B cell (primary cell): ENCODE measurements at regions of chr4 and their contacts with region 1.

Region 1: DNA sequence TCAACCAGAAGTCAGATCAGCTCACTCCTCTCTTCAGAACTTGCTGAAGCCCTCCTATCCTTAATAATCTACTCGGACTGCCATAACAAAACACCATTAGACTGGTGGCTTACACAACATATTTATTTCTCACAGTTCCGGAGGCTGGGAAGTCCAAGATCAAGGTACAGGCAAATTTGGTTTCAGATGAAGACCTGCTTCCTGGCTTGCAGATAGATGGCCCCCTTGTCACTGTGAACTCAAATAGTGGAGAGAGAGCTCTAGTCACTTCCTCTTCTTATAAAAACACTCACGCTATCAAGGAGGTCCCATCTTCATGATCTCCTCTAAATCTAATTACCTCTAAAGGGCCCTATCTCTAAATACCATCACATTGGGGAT is 125.1 kb downstream of the CAMK2D start:
- DNase-seq: peak; percentile 75
- ATAC-seq: peak; percentile 66
- H3K4me3 ChIP-seq: peak overlapping the region in 3 of 5 experiments; percentile 10 to 18 (median 12)
- H3K4me3 Mint-ChIP-seq: peak overlapping the region; percentile 64
- H3K27ac ChIP-seq: peak overlapping the region; percentile 71 to 76
- H3K27ac Mint-ChIP-seq: peak overlapping the region; percentile 86
- H3K4me1 ChIP-seq: peaks cover 56 to 71% of the 10 kb centered on the region in 2 donors
- H3K4me1 Mint-ChIP-seq: peaks cover 70% of the 10 kb centered on the region
- H3K27me3 ChIP-seq: no peaks in the 10 kb centered on the region
- H3K27me3 Mint-ChIP-seq: no peaks in the 10 kb centered on the region
- CTCF ChIP-seq: peak; percentile 52

Region 2: DNA sequence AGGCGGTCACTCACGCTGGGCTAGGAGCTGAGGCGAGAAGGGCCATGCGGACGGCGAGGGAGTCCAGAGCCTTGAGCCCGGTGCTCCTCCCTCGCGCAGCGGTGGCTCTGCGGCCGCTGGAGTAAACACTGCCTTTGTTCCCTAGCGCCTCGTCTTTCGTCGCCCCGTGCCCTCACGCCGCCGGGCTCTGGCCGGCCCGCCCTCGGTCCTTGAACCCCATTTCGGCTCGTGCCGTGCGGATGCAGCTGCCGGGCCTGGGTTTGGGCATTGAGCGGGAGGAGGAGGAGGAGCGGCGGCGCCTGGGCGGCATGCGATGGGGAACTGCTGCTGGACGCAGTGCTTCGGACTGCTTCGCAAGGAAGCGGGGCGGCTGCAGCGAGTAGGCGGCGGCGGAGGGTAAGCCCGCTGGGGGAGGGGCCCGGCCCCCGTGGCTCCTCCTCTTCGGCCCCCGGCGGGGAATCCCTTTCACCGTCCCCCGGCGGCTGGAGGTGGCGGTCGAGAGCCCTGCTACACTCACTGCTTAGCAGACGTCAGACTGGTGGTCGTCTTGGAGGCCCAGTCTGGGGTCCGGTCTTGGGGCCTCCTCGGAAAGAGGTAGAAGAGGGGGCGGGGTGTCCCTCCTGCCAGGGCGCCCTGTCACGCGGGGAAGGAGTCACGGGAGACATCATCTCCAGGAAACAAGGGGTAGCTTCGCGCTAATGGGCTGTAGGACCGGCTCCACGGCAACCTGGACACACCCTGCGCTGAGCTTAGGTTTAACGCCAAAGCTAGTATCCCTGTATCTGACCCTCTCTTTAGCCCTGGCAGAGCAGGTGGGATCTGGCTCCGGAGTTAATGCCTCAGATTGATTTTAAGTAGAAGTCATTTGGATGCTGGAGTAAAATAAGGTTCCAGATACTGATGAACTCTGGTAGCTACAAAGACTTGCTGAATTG is 1404.4 kb before region 1 on chr4 and contains the start of gene AP1AR:
- CTCF ChIA-PET with region 1: no interaction called
- POLR2A ChIA-PET with region 1: no interaction called
- intact Hi-C with region 1: no loop called
- DNase-seq: peak; percentile 95
- ATAC-seq: peak; percentile 73
- H3K4me3 ChIP-seq: peak within 1 kb of the TSS; percentile 78 to 98 (median 94)
- H3K4me3 Mint-ChIP-seq: peak within 1 kb of the TSS; percentile 99
- H3K27ac ChIP-seq: peak within 1 kb of the TSS; percentile 94 to 98
- H3K27ac Mint-ChIP-seq: peak within 1 kb of the TSS; percentile 99
- H3K4me1 ChIP-seq: peaks cover 13 to 19% of the 10 kb centered on the region in 2 donors
- H3K4me1 Mint-ChIP-seq: peaks cover 25% of the 10 kb centered on the region
- H3K27me3 ChIP-seq: no peaks in the 10 kb centered on the region
- H3K27me3 Mint-ChIP-seq: peaks cover 1% of the 10 kb centered on the region
- CTCF ChIP-seq: peak; percentile 54
- total RNA-seq, gene AP1AR: 20.3 and 24.0 TPM in 2 replicates

Region 3: GRCh38 chr4:113547487-113548042 is 88.9 kb before region 1 on chr4:
- CTCF ChIA-PET with region 1: interaction called, 24 read pairs
- POLR2A ChIA-PET with region 1: no interaction called
- intact Hi-C with region 1: loop called (anchors 2 kb)
- DNase-seq: peak; percentile 92
- ATAC-seq: peak; percentile 100
- H3K4me3 ChIP-seq: no peak overlapping the region
- H3K4me3 Mint-ChIP-seq: no peak overlapping the region
- H3K27ac ChIP-seq: peak overlapping the region; percentile 13 to 52
- H3K27ac Mint-ChIP-seq: peak overlapping the region; percentile 78
- H3K4me1 ChIP-seq: peaks cover 14 to 15% of the 10 kb centered on the region in 2 donors
- H3K4me1 Mint-ChIP-seq: peaks cover 22% of the 10 kb centered on the region
- H3K27me3 ChIP-seq: no peaks in the 10 kb centered on the region
- H3K27me3 Mint-ChIP-seq: no peaks in the 10 kb centered on the region
- CTCF ChIP-seq: peak; percentile 98

Region 4: DNA sequence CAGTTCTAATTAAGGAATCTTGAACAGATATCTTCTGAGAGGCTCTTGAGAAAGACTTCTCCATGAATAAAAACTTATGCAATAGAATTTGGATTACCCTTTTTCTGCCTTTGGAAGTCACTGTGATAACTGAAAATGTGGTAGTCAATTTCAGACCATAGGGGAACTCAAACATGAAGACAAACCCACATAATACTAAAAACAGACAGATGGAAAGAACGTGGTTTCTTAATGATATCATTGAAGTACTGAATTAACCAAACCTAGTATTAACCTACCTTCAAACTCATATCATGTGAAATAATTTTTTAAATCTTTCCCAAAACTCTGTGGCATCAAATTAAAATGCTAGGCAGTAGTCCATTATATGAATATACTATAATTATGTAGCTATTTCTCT is 28.4 kb before region 1 on chr4:
- CTCF ChIA-PET with region 1: no interaction called
- POLR2A ChIA-PET with region 1: no interaction called
- intact Hi-C with region 1: loop called (anchors 5 kb)
- DNase-seq: no peak
- ATAC-seq: no peak
- H3K4me3 ChIP-seq: no peak overlapping the region
- H3K4me3 Mint-ChIP-seq: peak overlapping the region; percentile 3
- H3K27ac ChIP-seq: no peak overlapping the region
- H3K27ac Mint-ChIP-seq: no peak overlapping the region
- H3K4me1 ChIP-seq: peaks cover 26 to 42% of the 10 kb centered on the region in 2 donors
- H3K4me1 Mint-ChIP-seq: peaks cover 67% of the 10 kb centered on the region
- H3K27me3 ChIP-seq: no peaks in the 10 kb centered on the region
- H3K27me3 Mint-ChIP-seq: no peaks in the 10 kb centered on the region
- CTCF ChIP-seq: no peak

Region 5: GRCh38 chr4:113625902-113626301 is 10.5 kb before region 1 on chr4:
- CTCF ChIA-PET with region 1: interaction called, 11 read pairs
- POLR2A ChIA-PET with region 1: no interaction called
- intact Hi-C with region 1: no loop called
- DNase-seq: no peak
- ATAC-seq: no peak
- H3K4me3 ChIP-seq: no peak overlapping the region
- H3K4me3 Mint-ChIP-seq: no peak overlapping the region
- H3K27ac ChIP-seq: no peak overlapping the region
- H3K27ac Mint-ChIP-seq: no peak overlapping the region
- H3K4me1 ChIP-seq: peaks cover 14 to 25% of the 10 kb centered on the region in 2 donors
- H3K4me1 Mint-ChIP-seq: peaks cover 62% of the 10 kb centered on the region
- H3K27me3 ChIP-seq: no peaks in the 10 kb centered on the region
- H3K27me3 Mint-ChIP-seq: no peaks in the 10 kb centered on the region
- CTCF ChIP-seq: no peak

Region 6: DNA sequence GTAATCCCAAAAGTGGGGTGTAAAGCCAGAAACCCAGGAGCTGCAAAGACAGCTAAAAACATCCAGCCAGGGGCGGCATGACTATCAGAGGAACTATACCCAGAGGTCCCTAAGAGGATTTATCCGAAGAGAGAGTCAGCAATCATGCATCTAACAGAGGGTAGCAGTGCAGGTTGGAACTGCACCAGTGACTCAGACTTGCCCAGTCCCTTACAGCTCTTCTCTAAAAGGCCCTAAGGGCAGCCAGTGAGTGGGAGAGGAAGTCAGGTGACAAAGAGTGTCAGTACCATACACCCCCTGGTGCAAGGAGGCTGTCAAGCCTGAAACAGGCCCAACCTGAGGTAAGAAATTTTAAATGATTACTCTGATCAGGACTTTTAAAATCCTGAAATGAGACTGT is 37.0 kb after region 1 on chr4:
- CTCF ChIA-PET with region 1: interaction called, 12 read pairs
- POLR2A ChIA-PET with region 1: no interaction called
- intact Hi-C with region 1: loop called (anchors 5 kb)
- DNase-seq: peak; percentile 33
- ATAC-seq: peak; percentile 82
- H3K4me3 ChIP-seq: no peak overlapping the region
- H3K4me3 Mint-ChIP-seq: no peak overlapping the region
- H3K27ac ChIP-seq: no peak overlapping the region
- H3K27ac Mint-ChIP-seq: peak overlapping the region; percentile 63
- H3K4me1 ChIP-seq: peaks cover 34 to 42% of the 10 kb centered on the region in 2 donors
- H3K4me1 Mint-ChIP-seq: peaks cover 55% of the 10 kb centered on the region
- H3K27me3 ChIP-seq: no peaks in the 10 kb centered on the region
- H3K27me3 Mint-ChIP-seq: no peaks in the 10 kb centered on the region
- CTCF ChIP-seq: no peak

Region 7: DNA sequence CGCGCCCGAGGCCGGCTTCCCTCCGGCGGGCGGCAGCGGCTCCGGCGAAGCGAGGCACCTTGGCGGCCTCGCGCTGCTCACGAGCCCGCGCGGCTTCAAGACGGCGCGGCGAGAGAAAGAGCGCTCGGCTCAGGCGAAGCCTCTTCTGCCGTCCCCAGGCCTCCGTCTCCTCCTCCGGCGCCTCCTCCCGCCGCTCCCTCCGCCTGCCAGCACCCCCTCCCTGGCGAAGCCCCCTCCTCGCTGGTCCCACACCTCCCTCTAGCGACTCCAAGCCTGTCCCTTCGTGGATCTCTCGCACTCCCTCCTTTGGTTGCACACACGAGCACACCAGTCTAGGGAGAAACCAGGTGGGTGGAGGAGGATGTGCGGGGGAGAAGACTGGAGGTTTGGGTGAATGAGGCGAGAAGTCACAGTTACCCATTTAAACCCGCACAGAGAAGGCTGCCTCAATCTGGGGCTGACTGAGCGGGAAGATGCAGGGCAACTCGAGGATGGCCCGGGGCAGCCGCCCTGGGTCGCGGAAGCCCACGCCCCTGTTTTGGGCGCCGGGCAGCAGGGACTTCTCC is 125.3 kb after region 1 on chr4 and contains the start of gene CAMK2D:
- CTCF ChIA-PET with region 1: interaction called, 20 read pairs
- POLR2A ChIA-PET with region 1: interaction called, 4 read pairs
- intact Hi-C with region 1: loop called (anchors 1 kb)
- DNase-seq: peak; percentile 91
- ATAC-seq: peak; percentile 46
- H3K4me3 ChIP-seq: peak within 1 kb of the TSS; percentile 91 to 96 (median 93)
- H3K4me3 Mint-ChIP-seq: peak within 1 kb of the TSS; percentile 94
- H3K27ac ChIP-seq: peak within 1 kb of the TSS; percentile 98 to 99
- H3K27ac Mint-ChIP-seq: peak within 1 kb of the TSS; percentile 98
- H3K4me1 ChIP-seq: peaks cover 16 to 27% of the 10 kb centered on the region in 2 donors
- H3K4me1 Mint-ChIP-seq: peaks cover 36% of the 10 kb centered on the region
- H3K27me3 ChIP-seq: no peaks in the 10 kb centered on the region
- H3K27me3 Mint-ChIP-seq: no peaks in the 10 kb centered on the region
- CTCF ChIP-seq: peak; percentile 34
- total RNA-seq, gene CAMK2D: 55.9 and 57.0 TPM in 2 replicates

Region 8: GRCh38 chr4:113908829-113909228 is 272.4 kb after region 1 on chr4:
- CTCF ChIA-PET with region 1: no interaction called
- POLR2A ChIA-PET with region 1: no interaction called
- intact Hi-C with region 1: loop called (anchors 5 kb)
- DNase-seq: peak; percentile 9
- ATAC-seq: no peak
- H3K4me3 ChIP-seq: no peak overlapping the region
- H3K4me3 Mint-ChIP-seq: no peak overlapping the region
- H3K27ac ChIP-seq: no peak overlapping the region
- H3K27ac Mint-ChIP-seq: no peak overlapping the region
- H3K4me1 ChIP-seq: no peaks in the 10 kb centered on the region
- H3K4me1 Mint-ChIP-seq: no peaks in the 10 kb centered on the region
- H3K27me3 ChIP-seq: no peaks in the 10 kb centered on the region
- H3K27me3 Mint-ChIP-seq: peaks cover 3% of the 10 kb centered on the region
- CTCF ChIP-seq: peak; percentile 18

Region 9: DNA sequence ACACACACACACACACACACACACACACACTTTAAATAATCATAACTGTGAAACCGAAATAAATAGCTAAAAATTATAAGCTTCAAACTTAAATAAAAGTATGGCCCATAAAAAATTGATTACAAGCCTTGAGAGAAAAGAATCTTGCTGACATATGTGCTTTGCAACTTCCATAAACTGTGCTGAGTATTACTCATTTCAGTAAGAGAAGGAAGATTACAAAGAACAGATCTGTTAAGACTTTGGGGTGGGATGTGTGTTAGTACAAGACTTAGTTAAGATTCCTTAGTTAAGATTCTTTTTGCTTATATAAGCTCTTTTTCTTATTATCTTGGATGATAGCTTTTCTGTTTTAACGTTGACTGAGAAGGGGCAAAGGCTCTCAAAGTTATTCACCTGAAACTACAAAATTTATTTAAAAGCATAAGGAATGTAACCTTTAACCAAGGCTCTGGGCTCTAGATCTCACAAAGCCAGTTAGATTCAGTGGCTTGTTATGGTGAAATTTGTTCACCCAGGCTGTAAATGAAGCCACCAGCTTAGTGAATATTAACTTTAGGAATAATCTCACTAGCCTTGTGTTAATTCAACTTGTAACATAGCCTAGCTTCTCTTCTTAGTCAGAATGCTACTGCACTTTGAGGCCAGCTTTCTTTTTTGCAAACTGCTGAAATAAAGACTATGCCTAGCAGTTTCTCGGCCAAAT is 284.8 kb after region 1 on chr4:
- CTCF ChIA-PET with region 1: no interaction called
- POLR2A ChIA-PET with region 1: no interaction called
- intact Hi-C with region 1: no loop called
- DNase-seq: no peak
- ATAC-seq: no peak
- H3K4me3 ChIP-seq: no peak overlapping the region
- H3K4me3 Mint-ChIP-seq: no peak overlapping the region
- H3K27ac ChIP-seq: no peak overlapping the region
- H3K27ac Mint-ChIP-seq: no peak overlapping the region
- H3K4me1 ChIP-seq: no peaks in the 10 kb centered on the region
- H3K4me1 Mint-ChIP-seq: no peaks in the 10 kb centered on the region
- H3K27me3 ChIP-seq: peaks cover 0 to 3% (median 0%) of the 10 kb centered on the region in 4 experiments
- H3K27me3 Mint-ChIP-seq: peaks cover 4% of the 10 kb centered on the region
- CTCF ChIP-seq: no peak